Dendritic cell treated with granulocyte-macrophage colony-stimulating factor and Interleukin-4, amounts not matched to agents 40 ng/mL and 50 ng/mL, for 4 days (primary cell): ENCODE measurements at regions of chr5 and their contacts with region 1.

Region 1: DNA sequence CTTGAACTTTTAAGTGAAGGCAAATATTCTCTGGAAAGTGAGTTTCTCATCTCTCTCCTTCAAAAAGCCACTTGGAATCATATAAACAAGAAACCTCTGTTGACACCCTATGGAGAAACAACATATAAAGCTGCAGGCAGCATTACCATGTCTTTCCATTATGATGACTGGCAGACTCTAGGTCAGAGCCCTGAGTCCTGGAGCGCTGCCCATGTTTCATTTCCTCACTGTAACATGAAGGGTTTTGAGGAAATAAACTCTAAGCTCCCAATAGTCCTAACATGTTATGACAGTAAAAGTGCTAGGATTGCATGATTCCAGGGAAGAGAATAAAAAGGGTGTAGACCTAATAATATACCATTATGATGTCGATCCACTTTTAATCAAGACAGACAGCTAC is 220.6 kb downstream of the CTNND2 start:
- H3K4me3 Mint-ChIP-seq: no peak overlapping the region
- H3K27ac Mint-ChIP-seq: peak overlapping the region; percentile 21
- H3K4me1 Mint-ChIP-seq: peaks cover 7% of the 10 kb centered on the region
- H3K27me3 Mint-ChIP-seq: peaks cover 17% of the 10 kb centered on the region

Region 2: DNA sequence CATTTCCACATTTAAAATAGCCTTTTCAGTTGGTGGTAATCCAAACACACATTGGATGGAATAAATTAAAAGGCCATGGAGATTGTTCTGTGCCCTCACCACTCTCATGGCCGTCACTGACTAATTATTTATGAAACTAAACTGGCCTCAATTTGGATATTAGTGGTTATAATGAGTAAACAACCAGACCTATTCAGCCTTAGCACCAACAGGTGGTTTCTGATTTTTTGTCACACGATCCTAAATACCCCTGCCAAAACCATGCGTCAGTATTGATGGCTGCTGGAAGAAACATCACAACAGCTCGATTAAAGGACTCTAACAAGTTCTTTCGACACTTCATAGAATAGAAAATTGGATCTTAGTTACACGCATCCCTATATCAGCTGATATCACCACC is 646.6 kb before region 1 on chr5:
- intact Hi-C with region 1: loop called (anchors 10 kb)
- H3K4me3 Mint-ChIP-seq: no peak overlapping the region
- H3K27ac Mint-ChIP-seq: no peak overlapping the region
- H3K4me1 Mint-ChIP-seq: no peaks in the 10 kb centered on the region
- H3K27me3 Mint-ChIP-seq: peaks cover 37% of the 10 kb centered on the region

Region 3: GRCh38 chr5:11620172-11620571 is 63.5 kb before region 1 on chr5:
- intact Hi-C with region 1: no loop called
- H3K4me3 Mint-ChIP-seq: no peak overlapping the region
- H3K27ac Mint-ChIP-seq: no peak overlapping the region
- H3K4me1 Mint-ChIP-seq: no peaks in the 10 kb centered on the region
- H3K27me3 Mint-ChIP-seq: no peaks in the 10 kb centered on the region

Region 4: GRCh38 chr5:11700391-11700790 is 16.7 kb after region 1 on chr5:
- intact Hi-C with region 1: no loop called
- H3K4me3 Mint-ChIP-seq: no peak overlapping the region
- H3K27ac Mint-ChIP-seq: no peak overlapping the region
- H3K4me1 Mint-ChIP-seq: no peaks in the 10 kb centered on the region
- H3K27me3 Mint-ChIP-seq: peaks cover 3% of the 10 kb centered on the region